Activated B cell treated with CpG ODN at 0.5 μM for 24 hours (primary cell): ENCODE measurements at regions of chr2 and their contacts with region 1.

Region 1: DNA sequence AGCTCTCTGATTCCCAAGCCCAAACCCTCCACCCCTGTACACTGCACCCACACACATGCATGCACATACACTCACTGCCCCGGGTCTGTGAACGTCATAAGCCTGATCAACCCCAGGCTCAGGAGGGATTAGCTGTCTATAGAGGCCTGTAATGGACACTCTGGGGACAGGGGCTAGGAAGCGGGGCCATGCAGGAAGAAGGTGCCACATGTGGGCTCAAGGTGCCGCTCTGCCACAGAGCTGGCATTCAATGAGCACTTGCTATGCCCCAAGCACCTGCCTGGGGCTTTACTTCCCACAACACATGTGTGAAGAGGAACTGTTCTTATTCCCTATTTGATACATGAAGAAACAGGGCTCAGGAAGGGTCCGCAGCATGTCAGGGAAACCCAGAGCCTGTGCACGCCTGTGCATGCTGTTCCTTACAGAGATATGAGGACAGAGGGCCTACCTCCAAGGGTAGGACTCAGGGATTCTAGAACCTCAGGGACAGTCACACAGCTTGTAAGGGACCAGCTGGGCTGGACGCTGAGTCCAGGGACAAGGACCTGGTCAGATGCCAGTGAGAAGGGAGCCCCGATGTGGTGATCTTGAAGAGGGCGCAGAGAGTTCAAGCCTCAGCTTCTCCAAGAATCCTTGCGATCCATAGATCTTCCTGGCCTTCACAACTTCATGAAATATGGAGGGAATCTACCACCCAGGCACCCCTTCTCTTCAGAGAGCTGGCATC is 5.0 kb downstream of the BIN1 start:
- DNase-seq: no peak
- ATAC-seq: no peak
- H3K4me3 Mint-ChIP-seq: no peak overlapping the region
- H3K27ac Mint-ChIP-seq: no peak overlapping the region
- H3K4me1 Mint-ChIP-seq: no peaks in the 10 kb centered on the region
- H3K27me3 Mint-ChIP-seq: peaks cover 1% of the 10 kb centered on the region
- CTCF ChIP-seq: no peak

Region 2: GRCh38 chr2:126850940-126851339 is 251.0 kb before region 1 on chr2:
- CTCF ChIA-PET with region 1: no interaction called
- POLR2A ChIA-PET with region 1: no interaction called
- intact Hi-C with region 1: no loop called
- DNase-seq: no peak
- ATAC-seq: no peak
- H3K4me3 Mint-ChIP-seq: no peak overlapping the region
- H3K27ac Mint-ChIP-seq: no peak overlapping the region
- H3K4me1 Mint-ChIP-seq: no peaks in the 10 kb centered on the region
- H3K27me3 Mint-ChIP-seq: peaks cover 6% of the 10 kb centered on the region
- CTCF ChIP-seq: no peak

Region 3: DNA sequence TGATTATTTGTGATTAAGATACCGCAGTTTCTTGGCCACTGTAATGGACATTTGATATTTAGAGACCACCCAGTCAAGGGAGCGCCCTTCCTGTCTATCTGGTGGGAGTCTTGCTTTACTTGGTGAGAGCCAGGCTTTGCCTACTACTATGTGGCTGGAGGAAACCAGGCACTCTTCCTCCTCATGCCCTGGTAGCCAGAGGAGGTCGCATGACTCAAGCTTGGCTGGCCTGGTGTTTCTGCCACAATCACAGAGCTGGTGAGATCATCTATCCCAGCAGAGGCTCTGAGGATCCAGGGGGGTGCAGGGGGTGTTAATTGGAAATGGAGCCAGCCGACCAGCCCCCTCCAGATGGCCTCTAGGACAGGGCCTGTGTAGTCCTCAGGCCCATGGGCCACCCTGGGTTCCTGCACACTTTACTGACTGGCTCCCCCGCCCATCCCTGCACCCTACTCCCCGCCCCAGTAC is 51.8 kb after region 1 on chr2:
- CTCF ChIA-PET with region 1: no interaction called
- POLR2A ChIA-PET with region 1: interaction called, 10 read pairs
- intact Hi-C with region 1: loop called (anchors 1 kb)
- DNase-seq: no peak
- ATAC-seq: no peak
- H3K4me3 Mint-ChIP-seq: no peak overlapping the region
- H3K27ac Mint-ChIP-seq: no peak overlapping the region
- H3K4me1 Mint-ChIP-seq: peaks cover 18% of the 10 kb centered on the region
- H3K27me3 Mint-ChIP-seq: no peaks in the 10 kb centered on the region
- CTCF ChIP-seq: no peak

Region 4: GRCh38 chr2:127220102-127220767 is 118.3 kb after region 1 on chr2 and contains the start of gene CYP27C1:
- CTCF ChIA-PET with region 1: no interaction called
- POLR2A ChIA-PET with region 1: no interaction called
- intact Hi-C with region 1: no loop called
- DNase-seq: no peak
- ATAC-seq: peak; percentile 25
- H3K4me3 Mint-ChIP-seq: peak within 1 kb of the TSS; percentile 76
- H3K27ac Mint-ChIP-seq: peak within 1 kb of the TSS; percentile 46
- H3K4me1 Mint-ChIP-seq: peaks cover 28% of the 10 kb centered on the region
- H3K27me3 Mint-ChIP-seq: peaks cover 52% of the 10 kb centered on the region
- CTCF ChIP-seq: no peak
- total RNA-seq, gene CYP27C1: not detected in 2 replicates